Adrenal gland (tissue), 19 donors: ENCODE measurements at regions of chr12 and their contacts with region 1.

Region 1: GRCh38 chr12:59834659-59835474 is 239.0 kb downstream of the SLC16A7 start:
- DNase-seq: peak in 1 of 7 donors; percentile 16
- H3K4me3 ChIP-seq: no peak overlapping the region
- H3K27ac ChIP-seq: no peak overlapping the region
- H3K4me1 ChIP-seq: no peaks in the 10 kb centered on the region
- H3K27me3 ChIP-seq: no peaks in the 10 kb centered on the region
- CTCF ChIP-seq: peak; percentile 40 to 73 (median 56)
- POLR2A ChIP-seq: no peak

Region 2: DNA sequence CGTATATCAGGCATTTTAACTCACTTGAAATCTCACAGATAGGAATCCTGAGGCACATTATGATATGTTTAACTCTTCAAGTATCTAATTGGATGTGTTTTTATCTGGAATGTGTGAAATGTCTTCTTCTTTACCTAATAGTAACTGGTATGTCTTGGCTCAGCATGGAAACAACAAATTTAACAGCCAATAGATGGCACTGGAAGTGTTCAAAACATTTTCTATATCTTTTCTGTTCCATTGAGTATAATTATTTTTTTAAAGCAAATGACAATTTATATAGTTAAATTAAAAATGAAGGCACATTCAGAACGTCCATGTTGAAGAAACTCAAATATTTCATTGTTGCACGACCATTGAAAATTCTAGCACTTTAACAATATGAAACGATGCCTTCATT is 403.6 kb before region 1 on chr12:
- intact Hi-C with region 1: loop called in 1 of 2 experiments (anchors 10 kb)
- DNase-seq: no peak
- H3K4me3 ChIP-seq: no peak overlapping the region
- H3K27ac ChIP-seq: no peak overlapping the region
- H3K4me1 ChIP-seq: no peaks in the 10 kb centered on the region
- H3K27me3 ChIP-seq: no peaks in the 10 kb centered on the region
- CTCF ChIP-seq: peak in 3 of 6 experiments; percentile 29 to 42 (median 30)
- POLR2A ChIP-seq: no peak

Region 3: GRCh38 chr12:59787610-59788009 is 47.3 kb before region 1 on chr12:
- intact Hi-C with region 1: no loop called
- DNase-seq: no peak
- H3K4me3 ChIP-seq: no peak overlapping the region
- H3K27ac ChIP-seq: no peak overlapping the region
- H3K4me1 ChIP-seq: no peaks in the 10 kb centered on the region
- H3K27me3 ChIP-seq: no peaks in the 10 kb centered on the region
- CTCF ChIP-seq: no peak
- POLR2A ChIP-seq: no peak

Region 4: GRCh38 chr12:59895166-59895775 is 60.4 kb after region 1 on chr12:
- intact Hi-C with region 1: no loop called
- DNase-seq: no peak
- H3K4me3 ChIP-seq: no peak overlapping the region
- H3K27ac ChIP-seq: no peak overlapping the region
- H3K4me1 ChIP-seq: no peaks in the 10 kb centered on the region
- H3K27me3 ChIP-seq: no peaks in the 10 kb centered on the region
- CTCF ChIP-seq: no peak
- POLR2A ChIP-seq: no peak